CD4-positive, alpha-beta memory T cell (primary cell): ENCODE measurements at regions of chr18 and their contacts with region 1.

Region 1: DNA sequence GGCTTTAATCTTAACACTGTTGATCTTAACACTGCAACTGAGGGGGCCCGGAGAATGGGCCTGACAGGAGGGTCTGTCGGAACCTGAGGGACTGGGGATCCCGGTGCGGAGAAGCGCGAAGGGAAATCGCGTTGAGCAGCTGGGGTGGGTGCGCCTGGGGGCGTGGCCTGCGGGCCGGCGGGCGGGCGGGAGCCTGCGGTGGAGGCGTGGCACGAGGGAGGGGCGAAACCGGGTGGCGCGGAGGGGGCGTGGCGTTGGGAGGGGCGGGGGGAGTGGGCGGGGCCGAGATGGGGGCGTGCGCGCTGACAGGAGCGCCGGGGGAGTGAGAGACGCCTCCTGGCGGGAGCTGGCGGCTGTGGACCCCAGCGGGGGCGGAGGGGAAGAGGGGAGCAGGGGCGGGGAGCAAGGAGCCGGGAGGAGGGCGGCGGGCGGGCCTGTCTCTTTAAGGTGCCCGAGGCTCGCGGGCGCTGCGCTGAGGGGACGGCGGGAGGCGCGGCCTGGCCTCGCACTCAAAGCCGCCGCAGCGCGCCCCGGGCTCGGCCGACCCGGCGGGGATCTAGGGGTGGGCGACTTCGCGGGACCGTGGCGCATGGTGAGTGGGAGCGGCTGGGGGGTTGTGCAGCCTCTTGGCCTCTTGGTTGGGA is at the start of gene TWSG1:
- DNase-seq: peak; percentile 90 to 94 (median 91)
- H3K4me3 ChIP-seq: peak within 1 kb of the TSS; percentile 76 to 90
- H3K4me3 Mint-ChIP-seq: peak within 1 kb of the TSS; percentile 85 to 96 (median 90)
- H3K27ac ChIP-seq: peak within 1 kb of the TSS; percentile 57
- H3K27ac Mint-ChIP-seq: peak within 1 kb of the TSS; percentile 83 to 93 (median 91)
- H3K4me1 ChIP-seq: peaks cover 17% of the 10 kb centered on the region
- H3K4me1 Mint-ChIP-seq: peaks cover 8 to 27% (median 18%) of the 10 kb centered on the region in 4 donors
- H3K27me3 ChIP-seq: no peaks in the 10 kb centered on the region
- H3K27me3 Mint-ChIP-seq: peaks cover 1 to 6% of the 10 kb centered on the region in 2 donors
- total RNA-seq, gene TWSG1: 5.1 to 6.0 TPM

Region 2: DNA sequence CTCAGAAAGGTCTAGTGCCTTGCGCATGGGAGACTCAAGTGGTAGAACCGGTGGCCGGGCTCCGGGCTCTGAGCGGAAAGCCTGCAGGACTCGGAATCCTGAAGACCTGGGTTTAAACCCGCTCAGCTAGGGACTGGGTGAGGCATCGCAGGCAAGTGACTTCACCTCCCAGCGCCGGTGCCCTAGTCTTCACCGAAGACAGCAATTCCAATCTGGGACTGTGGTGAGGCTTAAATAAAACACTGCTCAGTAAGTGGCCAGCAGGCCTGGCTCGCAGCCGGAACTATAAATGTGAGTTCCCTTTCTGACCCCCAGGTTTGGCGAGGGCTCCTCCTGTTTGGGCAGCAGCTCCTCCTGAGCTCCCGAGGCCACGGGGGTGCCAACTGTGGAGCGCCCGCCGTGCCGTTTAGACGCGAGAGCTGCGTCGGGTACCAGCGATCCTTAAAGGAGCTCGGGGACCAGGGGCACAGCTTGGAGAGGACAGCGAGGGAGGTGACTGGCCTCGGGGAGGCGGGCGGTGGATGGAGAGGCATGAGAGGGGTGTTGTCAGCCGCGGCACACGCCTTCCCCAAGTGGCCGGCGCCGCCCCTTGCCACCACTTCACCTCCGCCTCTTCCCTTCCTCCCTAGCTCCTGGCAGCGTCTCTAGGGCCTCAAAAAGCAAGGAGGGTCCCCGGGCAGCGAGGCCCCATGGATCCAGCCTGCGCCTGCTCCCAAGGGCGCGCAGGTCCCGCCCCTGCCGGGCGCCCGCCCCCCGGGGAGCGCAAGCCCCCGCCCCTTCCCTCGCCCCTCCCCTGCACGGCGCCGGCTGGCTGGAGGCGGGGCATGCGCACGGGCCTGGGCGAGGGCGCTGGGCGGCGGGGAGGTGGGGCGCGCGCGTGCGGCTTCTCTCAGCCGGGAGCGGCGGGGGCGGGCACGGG is 629.8 kb before region 1 on chr18:
- CTCF ChIA-PET with region 1: no interaction called
- POLR2A ChIA-PET with region 1: no interaction called
- intact Hi-C with region 1: loop called (anchors 1 kb)
- DNase-seq: peak; percentile 76 to 86 (median 79)
- H3K4me3 ChIP-seq: peak overlapping the region; percentile 54 to 73
- H3K4me3 Mint-ChIP-seq: peak overlapping the region; percentile 87 to 96 (median 91)
- H3K27ac ChIP-seq: peak overlapping the region; percentile 48
- H3K27ac Mint-ChIP-seq: peak overlapping the region in 4 of 7 donors; percentile 50 to 79 (median 72)
- H3K4me1 ChIP-seq: peaks cover 26% of the 10 kb centered on the region
- H3K4me1 Mint-ChIP-seq: peaks cover 10 to 35% (median 15%) of the 10 kb centered on the region in 4 donors
- H3K27me3 ChIP-seq: peaks cover 29% of the 10 kb centered on the region
- H3K27me3 Mint-ChIP-seq: peaks cover 36 to 58% of the 10 kb centered on the region in 2 donors

Region 3: GRCh38 chr18:9474983-9475642 is 140.7 kb after region 1 on chr18 and contains the start of gene RALBP1:
- CTCF ChIA-PET with region 1: no interaction called
- POLR2A ChIA-PET with region 1: interaction called, 5 read pairs
- intact Hi-C with region 1: loop called (anchors 1 kb)
- DNase-seq: peak; percentile 96 to 98 (median 97)
- H3K4me3 ChIP-seq: peak within 1 kb of the TSS; percentile 86
- H3K4me3 Mint-ChIP-seq: peak within 1 kb of the TSS; percentile 94 to 99 (median 98)
- H3K27ac ChIP-seq: peak within 1 kb of the TSS; percentile 79
- H3K27ac Mint-ChIP-seq: peak within 1 kb of the TSS; percentile 95 to 98 (median 96)
- H3K4me1 ChIP-seq: peaks cover 24% of the 10 kb centered on the region
- H3K4me1 Mint-ChIP-seq: peaks cover 25 to 46% (median 33%) of the 10 kb centered on the region in 4 donors
- H3K27me3 ChIP-seq: no peaks in the 10 kb centered on the region
- H3K27me3 Mint-ChIP-seq: peaks cover 3 to 5% of the 10 kb centered on the region in 2 donors
- total RNA-seq, gene RALBP1: 44.9 to 49.9 TPM

Region 4: DNA sequence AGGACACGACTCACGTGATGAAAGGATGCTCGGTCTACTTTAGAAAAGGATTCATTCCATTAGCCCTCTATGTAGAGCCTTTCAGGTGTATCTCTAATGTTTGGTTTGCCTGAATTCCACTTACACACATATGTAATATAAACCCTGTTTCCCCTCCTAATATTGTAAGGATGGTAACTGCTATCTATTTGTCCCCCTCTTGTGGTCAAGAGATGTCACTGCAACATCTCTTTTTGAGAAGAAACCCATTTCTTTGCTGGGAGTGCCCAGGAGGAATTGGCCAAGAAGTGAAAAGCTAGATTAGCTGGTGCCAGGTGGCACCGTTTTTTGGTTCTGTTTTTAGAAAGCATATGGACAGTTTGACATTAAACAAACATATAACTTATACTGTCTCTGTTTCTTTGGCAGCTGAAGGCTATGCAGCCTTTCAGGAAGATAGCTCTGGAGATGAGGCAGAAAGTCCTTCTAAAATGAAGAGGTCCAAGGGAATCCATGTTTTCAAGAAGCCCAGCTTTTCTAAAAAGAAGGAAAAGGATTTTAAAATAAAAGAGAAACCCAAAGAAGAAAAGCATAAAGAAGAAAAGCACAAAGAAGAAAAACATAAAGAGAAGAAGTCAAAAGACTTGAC is 182.1 kb after region 1 on chr18:
- CTCF ChIA-PET with region 1: interaction called, 6 read pairs
- POLR2A ChIA-PET with region 1: no interaction called
- intact Hi-C with region 1: loop called (anchors 2 kb)
- DNase-seq: peak in 4 of 5 donors; percentile 35 to 50 (median 46)
- H3K4me3 ChIP-seq: no peak overlapping the region
- H3K4me3 Mint-ChIP-seq: no peak overlapping the region
- H3K27ac ChIP-seq: no peak overlapping the region
- H3K27ac Mint-ChIP-seq: peak overlapping the region in 3 of 7 donors; percentile 14 to 61 (median 30)
- H3K4me1 ChIP-seq: no peaks in the 10 kb centered on the region
- H3K4me1 Mint-ChIP-seq: peaks cover 0 to 12% (median 5%) of the 10 kb centered on the region in 4 donors
- H3K27me3 ChIP-seq: no peaks in the 10 kb centered on the region
- H3K27me3 Mint-ChIP-seq: no peaks in the 10 kb centered on the region

Region 5: GRCh38 chr18:9885170-9886004 is 550.9 kb after region 1 on chr18 and contains the start of gene TXNDC2:
- CTCF ChIA-PET with region 1: no interaction called
- POLR2A ChIA-PET with region 1: no interaction called
- intact Hi-C with region 1: no loop called
- DNase-seq: no peak
- H3K4me3 ChIP-seq: no peak within 1 kb of the TSS
- H3K4me3 Mint-ChIP-seq: no peak within 1 kb of the TSS
- H3K27ac ChIP-seq: no peak within 1 kb of the TSS
- H3K27ac Mint-ChIP-seq: no peak within 1 kb of the TSS
- H3K4me1 ChIP-seq: no peaks in the 10 kb centered on the region
- H3K4me1 Mint-ChIP-seq: no peaks in the 10 kb centered on the region
- H3K27me3 ChIP-seq: no peaks in the 10 kb centered on the region
- H3K27me3 Mint-ChIP-seq: peaks cover 2 to 3% of the 10 kb centered on the region in 2 donors
- total RNA-seq, gene TXNDC2: not detected